CD8-positive, alpha-beta T cell (primary cell): ENCODE measurements at regions of chr19 and their contacts with region 1.

Region 1: DNA sequence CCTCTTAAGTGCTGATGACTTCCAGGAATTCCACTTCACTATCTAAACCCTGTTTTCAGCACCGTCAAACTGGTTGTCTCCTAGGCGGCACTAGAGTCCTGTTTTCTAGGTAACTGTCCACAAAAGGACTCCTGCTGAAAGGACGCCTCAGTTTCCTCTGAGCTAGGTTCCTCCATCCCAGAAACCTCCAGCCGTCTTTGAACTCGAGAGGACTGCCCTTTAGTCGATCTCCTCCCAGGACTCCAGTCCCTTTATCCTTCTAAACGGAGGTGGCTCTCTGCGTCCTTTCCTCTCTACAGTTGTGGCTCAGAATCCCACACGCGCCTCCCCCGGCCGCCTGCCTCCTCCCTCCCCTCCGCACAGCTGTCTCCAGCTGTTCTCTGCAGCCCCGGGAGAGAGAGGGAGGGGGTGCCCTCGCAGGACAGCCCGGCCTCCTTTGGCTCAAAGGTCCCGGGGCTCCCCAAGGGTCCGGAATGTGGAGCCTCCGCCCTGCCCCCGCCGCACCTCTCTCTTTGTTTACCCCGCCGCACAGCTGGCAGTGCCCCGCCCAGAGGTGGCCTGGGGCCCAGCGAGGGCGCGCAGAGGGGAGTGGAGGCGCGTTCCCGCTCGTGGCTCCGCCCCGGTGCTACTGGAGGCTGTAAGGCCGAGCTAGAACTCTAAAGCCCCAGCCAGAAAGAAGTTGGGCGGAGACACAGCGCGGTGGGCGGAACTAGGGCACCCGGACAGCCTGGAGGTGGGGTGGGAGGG is 2.4 kb downstream of the LTBP4 start:
- DNase-seq: peak; percentile 92 to 98 (median 96)
- ATAC-seq: peak; percentile 73
- H3K4me3 ChIP-seq: peak overlapping the region; percentile 54 to 58
- H3K4me3 Mint-ChIP-seq: peak overlapping the region; percentile 89
- H3K27ac ChIP-seq: peak overlapping the region in 1 of 2 experiments; percentile 39
- H3K27ac Mint-ChIP-seq: peak overlapping the region; percentile 76
- H3K4me1 ChIP-seq: peaks cover 73% of the 10 kb centered on the region
- H3K4me1 Mint-ChIP-seq: peaks cover 66% of the 10 kb centered on the region
- H3K27me3 ChIP-seq: peaks cover 23 to 34% of the 10 kb centered on the region in 2 experiments
- H3K27me3 Mint-ChIP-seq: peaks cover 20% of the 10 kb centered on the region
- CTCF ChIP-seq: no peak

Region 2: DNA sequence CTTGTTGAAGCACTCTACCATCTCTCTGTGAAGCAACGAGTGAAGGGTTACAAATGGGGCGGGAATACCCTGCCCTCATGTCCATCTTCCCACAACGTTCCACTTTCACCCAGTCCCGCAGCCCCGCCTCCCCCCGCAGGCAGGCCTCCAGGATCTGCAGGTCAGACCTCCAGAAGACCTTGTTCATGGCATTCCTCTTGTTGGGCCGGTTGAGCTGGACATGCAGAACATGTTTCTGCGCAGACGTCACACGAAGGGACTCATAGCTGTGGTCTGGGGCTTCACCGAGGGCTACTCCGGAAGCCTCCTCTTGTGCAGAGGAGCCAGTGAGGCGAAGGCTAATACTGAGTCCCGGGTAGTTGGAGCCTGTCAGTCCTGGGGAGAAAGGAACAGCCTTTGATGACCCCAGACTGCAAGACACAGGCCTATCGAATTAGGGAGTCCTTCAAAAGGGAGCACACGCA is 1772.4 kb before region 1 on chr19:
- CTCF ChIA-PET with region 1: no interaction called
- POLR2A ChIA-PET with region 1: no interaction called
- intact Hi-C with region 1: loop called in 1 of 2 experiments (anchors 5 kb)
- DNase-seq: peak in 1 of 9 experiments; percentile 63
- ATAC-seq: no peak
- H3K4me3 ChIP-seq: peak overlapping the region; percentile 74
- H3K4me3 Mint-ChIP-seq: peak overlapping the region; percentile 90
- H3K27ac ChIP-seq: peak overlapping the region; percentile 66 to 85
- H3K27ac Mint-ChIP-seq: peak overlapping the region; percentile 89
- H3K4me1 ChIP-seq: peaks cover 21% of the 10 kb centered on the region
- H3K4me1 Mint-ChIP-seq: peaks cover 37% of the 10 kb centered on the region
- H3K27me3 ChIP-seq: no peaks in the 10 kb centered on the region
- H3K27me3 Mint-ChIP-seq: no peaks in the 10 kb centered on the region
- CTCF ChIP-seq: no peak

Region 3: DNA sequence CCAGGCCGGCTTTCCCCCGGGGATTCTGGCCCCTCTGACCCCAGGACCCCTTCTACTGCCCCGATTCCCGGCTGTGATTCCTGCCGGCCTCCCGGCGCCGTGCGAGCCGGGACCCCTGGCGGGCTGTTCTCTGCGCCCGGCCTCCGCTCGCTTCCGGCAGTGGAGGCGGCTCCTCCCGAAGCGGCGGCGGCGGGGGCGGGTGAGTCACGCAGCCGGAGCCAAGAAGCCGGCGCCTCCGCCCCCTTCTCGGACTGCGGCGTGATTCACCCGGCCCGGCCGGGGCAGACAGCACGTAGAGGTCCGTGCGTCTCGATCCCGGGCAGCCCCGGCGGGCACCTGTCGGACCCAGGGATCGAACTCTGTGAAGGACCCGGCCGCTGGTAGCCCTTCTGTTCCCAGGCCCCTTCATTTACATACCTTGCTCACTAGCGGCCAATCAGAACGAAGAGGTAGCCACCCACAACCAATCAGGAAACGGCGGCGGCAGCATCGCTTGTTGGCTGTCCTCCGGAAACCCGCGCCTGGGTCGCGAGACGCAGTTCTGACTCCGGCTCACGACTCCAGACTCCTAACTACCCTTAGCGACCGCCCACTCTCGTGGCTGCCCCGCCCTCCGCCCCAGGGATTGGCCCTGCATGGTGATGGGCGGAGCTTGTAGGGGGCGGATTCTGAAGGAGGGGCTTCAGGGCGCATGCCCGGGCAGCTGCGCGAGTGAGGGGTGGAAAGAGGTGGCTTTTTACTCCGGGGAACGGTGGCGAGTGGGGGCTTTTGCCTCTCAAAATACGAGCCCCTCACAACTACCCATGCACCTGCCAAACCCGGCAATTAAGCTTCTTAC is 177.9 kb before region 1 on chr19 and contains the start of gene SERTAD1:
- CTCF ChIA-PET with region 1: interaction called, 4 read pairs
- POLR2A ChIA-PET with region 1: interaction called, 7 read pairs
- intact Hi-C with region 1: loop called in 1 of 2 experiments (anchors 5 kb)
- DNase-seq: peak; percentile 100
- ATAC-seq: peak; percentile 93
- H3K4me3 ChIP-seq: peak within 1 kb of the TSS; percentile 72 to 92
- H3K4me3 Mint-ChIP-seq: peak within 1 kb of the TSS; percentile 92
- H3K27ac ChIP-seq: peak within 1 kb of the TSS; percentile 91 to 92
- H3K27ac Mint-ChIP-seq: peak within 1 kb of the TSS; percentile 98
- H3K4me1 ChIP-seq: peaks cover 17% of the 10 kb centered on the region
- H3K4me1 Mint-ChIP-seq: peaks cover 28% of the 10 kb centered on the region
- H3K27me3 ChIP-seq: no peaks in the 10 kb centered on the region
- H3K27me3 Mint-ChIP-seq: no peaks in the 10 kb centered on the region
- CTCF ChIP-seq: peak; percentile 55
- total RNA-seq, gene SERTAD1: 36.7 to 38.7 TPM

Region 4: GRCh38 chr19:40512473-40513344 is 90.9 kb before region 1 on chr19:
- CTCF ChIA-PET with region 1: no interaction called
- POLR2A ChIA-PET with region 1: no interaction called
- intact Hi-C with region 1: no loop called
- DNase-seq: no peak
- ATAC-seq: peak; percentile 11
- H3K4me3 ChIP-seq: no peak overlapping the region
- H3K4me3 Mint-ChIP-seq: no peak overlapping the region
- H3K27ac ChIP-seq: no peak overlapping the region
- H3K27ac Mint-ChIP-seq: no peak overlapping the region
- H3K4me1 ChIP-seq: no peaks in the 10 kb centered on the region
- H3K4me1 Mint-ChIP-seq: peaks cover 5% of the 10 kb centered on the region
- H3K27me3 ChIP-seq: peaks cover 7 to 14% of the 10 kb centered on the region in 2 experiments
- H3K27me3 Mint-ChIP-seq: peaks cover 52% of the 10 kb centered on the region
- CTCF ChIP-seq: no peak

Region 5: DNA sequence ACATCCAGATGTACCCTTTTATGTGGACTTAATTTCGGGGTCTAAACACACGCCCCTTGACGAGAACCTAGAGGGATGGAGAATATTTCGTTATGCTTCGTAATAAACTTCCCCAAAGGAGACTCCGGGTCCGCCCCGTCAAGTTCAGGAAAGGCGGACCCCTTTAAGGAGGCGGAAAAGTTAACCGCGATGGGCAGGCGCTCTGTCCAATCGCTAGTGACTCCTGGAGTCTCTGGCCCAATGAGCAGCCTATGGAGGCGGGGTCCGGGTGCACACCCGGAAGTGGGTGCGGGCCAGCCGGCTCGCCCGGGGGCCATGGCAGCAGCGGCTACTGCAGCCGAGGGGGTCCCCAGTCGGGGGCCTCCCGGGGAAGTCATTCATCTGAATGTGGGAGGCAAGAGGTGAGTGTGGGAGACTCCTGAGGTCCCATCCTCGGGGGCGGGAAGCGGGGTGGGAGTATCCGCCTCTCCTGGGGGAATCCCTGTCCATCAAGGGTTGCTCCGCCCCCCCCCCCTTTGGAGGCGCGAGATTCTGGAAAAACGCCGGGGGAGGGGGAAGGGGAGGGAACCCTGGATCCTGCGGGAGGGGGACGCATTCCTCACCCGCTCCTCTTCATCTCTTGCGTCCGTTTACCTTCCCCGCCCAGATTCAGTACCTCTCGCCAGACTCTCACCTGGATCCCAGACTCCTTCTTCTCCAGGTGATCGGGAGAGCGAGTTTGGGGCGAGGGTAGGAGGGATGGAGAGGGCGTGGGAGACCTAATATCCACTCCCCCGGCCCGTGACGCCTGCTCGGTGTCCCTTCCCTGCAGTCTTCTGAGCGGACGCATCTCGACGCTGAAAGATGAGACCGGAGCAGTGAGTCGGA is 26.7 kb before region 1 on chr19 and contains the start of gene SHKBP1:
- CTCF ChIA-PET with region 1: interaction called, 9 read pairs
- POLR2A ChIA-PET with region 1: no interaction called
- intact Hi-C with region 1: loop called (anchors 1 to 2 kb)
- DNase-seq: peak; percentile 84 to 97 (median 93)
- ATAC-seq: peak; percentile 99
- H3K4me3 ChIP-seq: peak within 1 kb of the TSS; percentile 72 to 94
- H3K4me3 Mint-ChIP-seq: peak within 1 kb of the TSS; percentile 90
- H3K27ac ChIP-seq: peak within 1 kb of the TSS; percentile 61 to 75
- H3K27ac Mint-ChIP-seq: peak within 1 kb of the TSS; percentile 80
- H3K4me1 ChIP-seq: peaks cover 20% of the 10 kb centered on the region
- H3K4me1 Mint-ChIP-seq: peaks cover 21% of the 10 kb centered on the region
- H3K27me3 ChIP-seq: no peaks in the 10 kb centered on the region
- H3K27me3 Mint-ChIP-seq: no peaks in the 10 kb centered on the region
- CTCF ChIP-seq: no peak
- total RNA-seq, gene SHKBP1: 93.8 to 95.3 TPM

Region 6: GRCh38 chr19:40640744-40641143 is 37.2 kb after region 1 on chr19:
- CTCF ChIA-PET with region 1: interaction called, 33 read pairs
- POLR2A ChIA-PET with region 1: no interaction called
- intact Hi-C with region 1: no loop called
- DNase-seq: peak in 1 of 9 experiments; percentile 52
- ATAC-seq: peak; percentile 26
- H3K4me3 ChIP-seq: no peak overlapping the region
- H3K4me3 Mint-ChIP-seq: no peak overlapping the region
- H3K27ac ChIP-seq: no peak overlapping the region
- H3K27ac Mint-ChIP-seq: no peak overlapping the region
- H3K4me1 ChIP-seq: peaks cover 6% of the 10 kb centered on the region
- H3K4me1 Mint-ChIP-seq: peaks cover 11% of the 10 kb centered on the region
- H3K27me3 ChIP-seq: peaks cover 0 to 3% of the 10 kb centered on the region in 2 experiments
- H3K27me3 Mint-ChIP-seq: peaks cover 2% of the 10 kb centered on the region
- CTCF ChIP-seq: no peak

Region 7: GRCh38 chr19:40674291-40674690 is 70.7 kb after region 1 on chr19:
- CTCF ChIA-PET with region 1: no interaction called
- POLR2A ChIA-PET with region 1: no interaction called
- intact Hi-C with region 1: no loop called
- DNase-seq: no peak
- ATAC-seq: no peak
- H3K4me3 ChIP-seq: no peak overlapping the region
- H3K4me3 Mint-ChIP-seq: no peak overlapping the region
- H3K27ac ChIP-seq: peak overlapping the region in 1 of 2 experiments; percentile 4
- H3K27ac Mint-ChIP-seq: no peak overlapping the region
- H3K4me1 ChIP-seq: peaks cover 4% of the 10 kb centered on the region
- H3K4me1 Mint-ChIP-seq: no peaks in the 10 kb centered on the region
- H3K27me3 ChIP-seq: no peaks in the 10 kb centered on the region
- H3K27me3 Mint-ChIP-seq: no peaks in the 10 kb centered on the region
- CTCF ChIP-seq: no peak

Region 8: GRCh38 chr19:40689318-40690049 is 85.9 kb after region 1 on chr19:
- CTCF ChIA-PET with region 1: no interaction called
- POLR2A ChIA-PET with region 1: no interaction called
- intact Hi-C with region 1: no loop called
- DNase-seq: peak in 4 of 9 experiments; percentile 37 to 65 (median 60)
- ATAC-seq: peak; percentile 6
- H3K4me3 ChIP-seq: no peak overlapping the region
- H3K4me3 Mint-ChIP-seq: peak overlapping the region; percentile 60
- H3K27ac ChIP-seq: no peak overlapping the region
- H3K27ac Mint-ChIP-seq: no peak overlapping the region
- H3K4me1 ChIP-seq: peaks cover 23% of the 10 kb centered on the region
- H3K4me1 Mint-ChIP-seq: peaks cover 7% of the 10 kb centered on the region
- H3K27me3 ChIP-seq: peaks cover 0 to 3% of the 10 kb centered on the region in 2 experiments
- H3K27me3 Mint-ChIP-seq: no peaks in the 10 kb centered on the region
- CTCF ChIP-seq: no peak

Region 9: DNA sequence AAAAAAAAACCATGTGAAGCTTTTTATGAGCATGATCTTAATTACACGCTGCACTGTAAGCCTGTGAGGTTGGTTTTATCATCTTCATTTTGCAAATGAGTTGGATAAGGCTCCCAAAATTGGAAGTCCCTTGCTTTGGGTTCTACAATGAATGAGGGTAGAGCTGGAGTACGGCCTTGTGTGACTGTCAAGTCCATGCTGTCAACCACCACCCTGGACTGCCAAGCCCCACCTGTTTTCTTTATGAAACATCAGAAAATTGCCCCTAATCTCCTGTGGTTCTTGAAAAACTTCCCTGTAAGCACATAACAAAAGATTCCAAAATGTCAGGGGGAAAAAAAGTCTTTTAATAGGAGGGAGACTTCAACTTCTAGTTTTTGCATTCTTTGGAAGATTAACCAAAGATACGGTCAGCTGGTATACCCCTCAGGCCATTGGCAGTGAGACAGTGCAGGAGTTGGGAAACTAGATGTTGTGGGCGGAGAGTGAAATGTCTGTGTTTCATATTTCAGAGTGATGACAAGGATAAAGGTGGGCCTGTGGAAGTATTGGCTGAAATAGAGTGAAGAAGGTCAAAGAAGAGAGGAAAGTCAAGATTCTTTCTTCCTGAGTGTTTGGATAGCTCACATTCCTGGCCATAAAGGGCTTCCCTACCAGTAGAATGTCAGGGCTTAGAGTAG is 428.2 kb after region 1 on chr19:
- CTCF ChIA-PET with region 1: no interaction called
- POLR2A ChIA-PET with region 1: no interaction called
- intact Hi-C with region 1: no loop called
- DNase-seq: no peak
- ATAC-seq: no peak
- H3K4me3 ChIP-seq: no peak overlapping the region
- H3K4me3 Mint-ChIP-seq: no peak overlapping the region
- H3K27ac ChIP-seq: no peak overlapping the region
- H3K27ac Mint-ChIP-seq: no peak overlapping the region
- H3K4me1 ChIP-seq: no peaks in the 10 kb centered on the region
- H3K4me1 Mint-ChIP-seq: peaks cover 8% of the 10 kb centered on the region
- H3K27me3 ChIP-seq: no peaks in the 10 kb centered on the region
- H3K27me3 Mint-ChIP-seq: peaks cover 8% of the 10 kb centered on the region
- CTCF ChIP-seq: no peak